ENCODE measurements at regions of chr17 and their contacts with region 1.

Region 1: DNA sequence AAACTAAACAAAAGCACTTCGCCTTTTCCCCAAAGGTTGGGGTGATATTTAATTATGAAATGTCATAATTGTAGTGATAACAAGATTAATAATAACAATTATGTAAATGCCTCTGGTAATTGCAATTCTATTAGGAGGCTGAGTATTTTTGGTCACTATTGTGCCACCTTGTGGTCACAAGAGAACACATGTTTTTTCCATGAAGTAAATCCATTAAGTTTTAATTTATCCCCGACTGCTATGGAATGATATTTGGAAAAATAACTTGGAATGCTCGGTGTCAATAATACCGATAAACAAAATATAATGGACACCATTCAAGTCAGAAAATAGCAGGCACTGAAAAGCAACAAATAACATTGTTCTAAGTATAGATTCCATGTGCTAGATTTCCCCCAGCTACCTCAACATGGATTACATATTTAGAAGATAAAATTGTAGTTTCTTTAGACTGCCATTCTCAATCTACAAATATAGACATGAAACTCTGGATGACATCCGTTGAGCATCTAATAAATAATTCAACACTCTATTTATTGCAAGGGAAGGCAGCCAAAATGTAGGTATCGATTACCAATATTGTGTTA is 25.0 kb upstream of the KCNJ2 start:
- DNase-seq: peak in 1 of 4 experiments; percentile 15
- ATAC-seq: no peak
- H3K4me3 ChIP-seq: no peak overlapping the region
- H3K27ac ChIP-seq: no peak overlapping the region
- H3K4me1 ChIP-seq: no peaks in the 10 kb centered on the region
- H3K27me3 ChIP-seq: no peaks in the 10 kb centered on the region
- CTCF ChIP-seq: peak in 2 of 3 experiments; percentile 13 to 55; a peak in 4 of 6 replicates
- EP300 ChIP-seq: no peak
- POLR2A ChIP-seq: no peak
- RAD21 ChIP-seq: peak; percentile 69 to 81

Region 2: GRCh38 chr17:69523244-69523861 is 621.0 kb before region 1 on chr17:
- CTCF ChIA-PET with region 1: no interaction called
- POLR2A ChIA-PET with region 1: no interaction called
- in situ Hi-C with region 1: no loop called
- intact Hi-C with region 1: loop called (anchors 5 kb)
- DNase-seq: peak; percentile 7 to 24 (median 14)
- ATAC-seq: 0 out of 3 replicates have a peak, but pooled peaks have one; percentile 38
- H3K4me3 ChIP-seq: no peak overlapping the region
- H3K27ac ChIP-seq: no peak overlapping the region
- H3K4me1 ChIP-seq: no peaks in the 10 kb centered on the region
- H3K27me3 ChIP-seq: no peaks in the 10 kb centered on the region
- CTCF ChIP-seq: peak; percentile 26 to 45 (median 44); a peak in 4 of 6 replicates
- EP300 ChIP-seq: no peak
- POLR2A ChIP-seq: no peak
- RAD21 ChIP-seq: peak; percentile 11 to 54; a peak in 3 of 4 replicates

Region 3: GRCh38 chr17:69574257-69575197 is 569.8 kb before region 1 on chr17:
- CTCF ChIA-PET with region 1: no interaction called
- POLR2A ChIA-PET with region 1: no interaction called
- in situ Hi-C with region 1: no loop called
- intact Hi-C with region 1: loop called (anchors 1 kb)
- DNase-seq: no peak
- ATAC-seq: no peak
- H3K4me3 ChIP-seq: no peak overlapping the region
- H3K27ac ChIP-seq: no peak overlapping the region
- H3K4me1 ChIP-seq: no peaks in the 10 kb centered on the region
- H3K27me3 ChIP-seq: no peaks in the 10 kb centered on the region
- CTCF ChIP-seq: no peak
- EP300 ChIP-seq: no peak
- POLR2A ChIP-seq: no peak
- RAD21 ChIP-seq: no peak

Region 4: DNA sequence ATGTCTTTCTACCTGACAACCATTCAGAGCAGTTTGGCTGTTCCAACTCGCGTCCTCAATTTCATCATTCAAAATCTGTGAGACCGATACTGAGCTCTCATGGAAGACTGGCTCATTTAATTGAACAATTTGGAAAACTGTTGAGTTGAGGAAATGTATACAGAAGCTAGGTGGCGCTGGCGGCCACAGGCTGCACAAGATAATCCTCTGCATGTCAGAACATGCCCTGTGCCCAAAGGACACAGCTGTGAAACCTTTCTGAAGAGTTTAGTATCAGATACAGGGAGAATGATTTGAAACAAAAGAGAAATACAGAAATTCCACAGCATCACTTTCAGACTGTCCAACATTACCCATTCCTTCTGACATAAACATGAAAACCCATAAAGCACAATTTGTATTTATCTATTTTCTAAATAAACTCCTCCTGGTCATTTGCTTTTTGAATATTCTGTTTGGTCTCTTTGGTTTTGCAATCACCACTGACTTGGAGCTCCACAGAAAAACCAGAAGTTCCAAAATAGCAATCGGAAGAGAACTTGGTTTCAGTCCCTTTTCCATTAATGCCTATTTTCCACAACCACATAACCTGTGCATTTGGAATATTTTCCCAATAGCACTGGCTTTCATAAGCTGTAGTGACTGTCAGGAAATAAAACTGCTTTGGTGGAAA is 537.1 kb before region 1 on chr17:
- CTCF ChIA-PET with region 1: interaction called, 3 read pairs
- POLR2A ChIA-PET with region 1: no interaction called
- in situ Hi-C with region 1: no loop called
- intact Hi-C with region 1: loop called (anchors 5 kb)
- DNase-seq: peak in 3 of 4 experiments; percentile 15 to 36 (median 21)
- ATAC-seq: peak; percentile 73
- H3K4me3 ChIP-seq: no peak overlapping the region
- H3K27ac ChIP-seq: no peak overlapping the region
- H3K4me1 ChIP-seq: no peaks in the 10 kb centered on the region
- H3K27me3 ChIP-seq: no peaks in the 10 kb centered on the region
- CTCF ChIP-seq: peak; percentile 45 to 65 (median 57)
- EP300 ChIP-seq: no peak
- POLR2A ChIP-seq: no peak
- RAD21 ChIP-seq: peak; percentile 48 to 71

Region 5: DNA sequence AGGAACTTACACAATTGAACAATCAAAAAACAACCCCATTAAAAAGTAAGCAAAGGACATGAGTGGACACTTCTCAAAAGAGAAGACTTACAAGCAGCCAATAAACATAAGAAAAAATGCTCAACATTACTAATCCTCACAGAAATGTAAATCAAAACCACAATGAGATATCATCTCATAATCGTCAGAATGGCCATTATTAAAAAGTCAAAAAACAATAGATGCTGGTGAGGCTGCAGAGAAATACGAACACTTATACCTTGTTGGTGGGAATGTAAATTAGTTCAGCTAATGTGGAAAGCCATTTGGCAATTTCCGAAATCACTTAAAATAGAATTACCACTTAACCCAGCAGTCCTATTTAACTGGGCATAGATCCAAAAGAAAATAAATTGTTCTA is 371.3 kb before region 1 on chr17:
- CTCF ChIA-PET with region 1: no interaction called
- POLR2A ChIA-PET with region 1: no interaction called
- in situ Hi-C with region 1: no loop called
- intact Hi-C with region 1: no loop called
- DNase-seq: no peak
- ATAC-seq: no peak
- H3K4me3 ChIP-seq: no peak overlapping the region
- H3K27ac ChIP-seq: no peak overlapping the region
- H3K4me1 ChIP-seq: no peaks in the 10 kb centered on the region
- H3K27me3 ChIP-seq: no peaks in the 10 kb centered on the region
- CTCF ChIP-seq: no peak
- EP300 ChIP-seq: no peak
- POLR2A ChIP-seq: no peak
- RAD21 ChIP-seq: no peak

Measured in K562 (cell line).